ENCODE measurements at regions of chr12 and their contacts with region 1.

Region 1: GRCh38 chr12:30806989-30807694 is 52.4 kb upstream of the CAPRIN2 start:
- DNase-seq: peak; percentile 16
- H3K4me3 Mint-ChIP-seq: no peak overlapping the region
- H3K27ac Mint-ChIP-seq: no peak overlapping the region
- H3K4me1 Mint-ChIP-seq: no peaks in the 10 kb centered on the region
- H3K27me3 Mint-ChIP-seq: peaks cover 13% of the 10 kb centered on the region

Region 2: GRCh38 chr12:29519585-29520182 is 1287.5 kb before region 1 on chr12:
- CTCF ChIA-PET with region 1: interaction called, 27 read pairs
- POLR2A ChIA-PET with region 1: no interaction called
- intact Hi-C with region 1: loop called (anchors 1 kb)
- DNase-seq: no peak
- H3K4me3 Mint-ChIP-seq: no peak overlapping the region
- H3K27ac Mint-ChIP-seq: no peak overlapping the region
- H3K4me1 Mint-ChIP-seq: no peaks in the 10 kb centered on the region
- H3K27me3 Mint-ChIP-seq: peaks cover 9% of the 10 kb centered on the region

Region 3: GRCh38 chr12:29552324-29552927 is 1254.7 kb before region 1 on chr12:
- CTCF ChIA-PET with region 1: interaction called, 22 read pairs
- POLR2A ChIA-PET with region 1: no interaction called
- intact Hi-C with region 1: loop called (anchors 1 kb)
- DNase-seq: peak; percentile 77
- H3K4me3 Mint-ChIP-seq: no peak overlapping the region
- H3K27ac Mint-ChIP-seq: no peak overlapping the region
- H3K4me1 Mint-ChIP-seq: no peaks in the 10 kb centered on the region
- H3K27me3 Mint-ChIP-seq: peaks cover 3% of the 10 kb centered on the region

Region 4: GRCh38 chr12:30908722-30909348 is 101.7 kb after region 1 on chr12:
- CTCF ChIA-PET with region 1: no interaction called
- POLR2A ChIA-PET with region 1: no interaction called
- intact Hi-C with region 1: no loop called
- DNase-seq: no peak
- H3K4me3 Mint-ChIP-seq: no peak overlapping the region
- H3K27ac Mint-ChIP-seq: no peak overlapping the region
- H3K4me1 Mint-ChIP-seq: no peaks in the 10 kb centered on the region
- H3K27me3 Mint-ChIP-seq: peaks cover 3% of the 10 kb centered on the region